Ovary (tissue), 10 donors: ENCODE measurements at regions of chr6 and their contacts with region 1.

Region 1: GRCh38 chr6:109009236-109009961 is 85.2 kb downstream of the SESN1 start:
- DNase-seq: peak; percentile 94 to 97 (median 96)
- H3K4me3 ChIP-seq: peak overlapping the region; percentile 76
- H3K27ac ChIP-seq: peak overlapping the region; percentile 97 to 98
- H3K4me1 ChIP-seq: peaks cover 8% of the 10 kb centered on the region
- H3K27me3 ChIP-seq: no peaks in the 10 kb centered on the region
- CTCF ChIP-seq: peak in 2 of 3 donors; percentile 81 to 83
- EP300 ChIP-seq: no peak
- POLR2A ChIP-seq: peak; percentile 89

Region 2: GRCh38 chr6:108947114-108947854 is 62.1 kb before region 1 on chr6:
- intact Hi-C with region 1: loop called in 3 of 4 experiments (anchors 5 to 10 kb)
- DNase-seq: peak in 1 of 5 donors; percentile 61
- H3K4me3 ChIP-seq: no peak overlapping the region
- H3K27ac ChIP-seq: peak overlapping the region; percentile 85 to 95
- H3K4me1 ChIP-seq: peaks cover 23% of the 10 kb centered on the region
- H3K27me3 ChIP-seq: no peaks in the 10 kb centered on the region
- CTCF ChIP-seq: no peak
- EP300 ChIP-seq: no peak
- POLR2A ChIP-seq: no peak

Region 3: GRCh38 chr6:108958900-108959770 is 50.3 kb before region 1 on chr6:
- intact Hi-C with region 1: loop called in 1 of 4 experiments (anchors 10 kb)
- DNase-seq: no peak
- H3K4me3 ChIP-seq: no peak overlapping the region
- H3K27ac ChIP-seq: no peak overlapping the region
- H3K4me1 ChIP-seq: peaks cover 8% of the 10 kb centered on the region
- H3K27me3 ChIP-seq: no peaks in the 10 kb centered on the region
- CTCF ChIP-seq: no peak
- EP300 ChIP-seq: no peak
- POLR2A ChIP-seq: no peak

Region 4: GRCh38 chr6:109059571-109060021 is 50.2 kb after region 1 on chr6:
- intact Hi-C with region 1: loop called in 2 of 4 experiments (anchors 10 kb)
- DNase-seq: no peak
- H3K4me3 ChIP-seq: no peak overlapping the region
- H3K27ac ChIP-seq: no peak overlapping the region
- H3K4me1 ChIP-seq: peaks cover 2% of the 10 kb centered on the region
- H3K27me3 ChIP-seq: no peaks in the 10 kb centered on the region
- CTCF ChIP-seq: no peak
- EP300 ChIP-seq: no peak
- POLR2A ChIP-seq: no peak

Region 5: DNA sequence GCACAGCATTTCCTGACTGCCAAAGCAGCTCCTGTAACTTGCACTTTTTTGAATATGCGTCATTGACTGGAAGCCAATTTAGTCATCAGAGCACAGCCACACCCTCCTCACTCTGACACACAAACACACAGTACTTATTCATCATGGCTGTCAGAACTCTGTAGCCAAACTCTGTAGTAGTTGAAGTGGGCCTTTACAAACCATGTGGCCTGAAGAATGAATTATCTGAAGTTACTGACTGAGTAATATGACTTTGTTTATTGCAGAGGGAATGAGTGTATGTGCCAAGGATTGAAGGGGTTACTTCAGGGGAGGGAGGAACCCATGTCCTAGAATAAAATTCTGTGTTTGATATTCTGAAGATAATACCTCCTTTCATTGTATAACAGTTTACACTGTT is 784.4 kb after region 1 on chr6:
- intact Hi-C with region 1: no loop called
- DNase-seq: peak in 1 of 5 donors; percentile 36
- H3K4me3 ChIP-seq: no peak overlapping the region
- H3K27ac ChIP-seq: no peak overlapping the region
- H3K4me1 ChIP-seq: peaks cover 1% of the 10 kb centered on the region
- H3K27me3 ChIP-seq: no peaks in the 10 kb centered on the region
- CTCF ChIP-seq: no peak
- EP300 ChIP-seq: no peak
- POLR2A ChIP-seq: no peak